ENCODE measurements at regions of chr7 and their contacts with region 1.

Region 1: DNA sequence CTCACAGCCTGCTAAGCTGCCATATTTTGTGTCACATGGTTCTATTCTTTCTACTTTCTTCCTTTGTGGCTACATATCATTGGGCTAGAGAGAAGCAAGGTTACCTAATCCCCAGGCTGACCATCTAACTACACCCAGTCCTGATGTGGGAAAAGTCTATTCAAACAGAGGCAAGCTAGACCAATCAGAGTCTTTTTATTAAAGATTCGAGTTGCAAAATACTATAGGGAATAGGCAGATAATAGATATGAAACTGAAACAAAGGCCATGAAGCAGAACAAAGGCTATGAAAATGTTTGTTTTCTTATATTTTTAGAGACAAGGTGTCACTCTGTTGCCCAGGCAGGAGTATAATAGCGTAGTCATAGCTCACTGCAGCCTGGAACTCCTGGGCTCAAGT is 36.7 kb downstream of the MTERF1 start:
- DNase-seq: peak; percentile 12
- CTCF ChIP-seq: no peak

Region 2: GRCh38 chr7:92447345-92448204 is 603.7 kb after region 1 on chr7 and contains the start of gene GATAD1:
- in situ Hi-C with region 1: loop called (anchors 25 kb)
- DNase-seq: peak; percentile 91
- CTCF ChIP-seq: peak; percentile 96

Region 3: GRCh38 chr7:93108003-93108402 is 1264.2 kb after region 1 on chr7:
- in situ Hi-C with region 1: no loop called
- DNase-seq: no peak
- CTCF ChIP-seq: no peak